Mammary epithelial cell (primary cell): ENCODE measurements at regions of chr17 and their contacts with region 1.

Region 1: DNA sequence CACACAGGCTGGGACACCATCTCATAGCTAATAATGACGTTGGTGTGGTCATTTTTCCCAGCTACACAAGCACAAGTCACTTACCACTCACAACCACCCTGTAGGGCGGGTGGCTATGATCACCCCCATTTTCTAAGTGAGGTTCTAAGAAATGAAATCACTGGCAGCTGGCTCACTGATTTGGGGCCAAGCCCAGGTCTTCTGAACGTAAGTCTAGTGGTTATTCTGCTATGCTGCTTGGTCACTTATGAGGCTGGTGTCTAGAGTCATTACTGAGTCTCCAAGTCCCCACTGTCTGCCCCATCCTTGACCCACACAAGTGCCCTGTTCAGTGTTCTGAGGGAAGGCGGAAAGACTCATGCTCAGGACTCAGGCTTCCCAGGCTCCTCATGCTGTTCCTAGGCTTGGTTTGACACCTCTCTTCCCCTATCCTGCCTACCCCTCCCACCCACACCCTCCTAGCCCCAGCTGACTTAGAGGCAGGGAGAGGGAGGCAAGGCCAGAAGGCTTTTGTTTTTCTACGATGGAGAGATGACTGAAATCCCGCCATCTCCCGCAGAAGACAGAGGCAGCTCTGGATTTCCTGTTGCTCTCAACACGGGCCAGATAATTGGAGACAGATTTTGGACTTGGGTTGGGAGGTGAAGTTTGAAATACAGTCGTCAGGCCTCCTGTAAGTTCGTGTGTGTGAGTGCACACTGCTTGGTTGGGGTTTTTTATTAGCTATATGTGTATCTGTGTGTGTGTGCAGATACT is 32.2 kb downstream of the FZD2 start:
- DNase-seq: no peak
- H3K4me3 ChIP-seq: no peak overlapping the region
- H3K27ac ChIP-seq: no peak overlapping the region
- H3K4me1 ChIP-seq: peaks cover 7% of the 10 kb centered on the region
- H3K27me3 ChIP-seq: no peaks in the 10 kb centered on the region
- CTCF ChIP-seq: no peak

Region 2: DNA sequence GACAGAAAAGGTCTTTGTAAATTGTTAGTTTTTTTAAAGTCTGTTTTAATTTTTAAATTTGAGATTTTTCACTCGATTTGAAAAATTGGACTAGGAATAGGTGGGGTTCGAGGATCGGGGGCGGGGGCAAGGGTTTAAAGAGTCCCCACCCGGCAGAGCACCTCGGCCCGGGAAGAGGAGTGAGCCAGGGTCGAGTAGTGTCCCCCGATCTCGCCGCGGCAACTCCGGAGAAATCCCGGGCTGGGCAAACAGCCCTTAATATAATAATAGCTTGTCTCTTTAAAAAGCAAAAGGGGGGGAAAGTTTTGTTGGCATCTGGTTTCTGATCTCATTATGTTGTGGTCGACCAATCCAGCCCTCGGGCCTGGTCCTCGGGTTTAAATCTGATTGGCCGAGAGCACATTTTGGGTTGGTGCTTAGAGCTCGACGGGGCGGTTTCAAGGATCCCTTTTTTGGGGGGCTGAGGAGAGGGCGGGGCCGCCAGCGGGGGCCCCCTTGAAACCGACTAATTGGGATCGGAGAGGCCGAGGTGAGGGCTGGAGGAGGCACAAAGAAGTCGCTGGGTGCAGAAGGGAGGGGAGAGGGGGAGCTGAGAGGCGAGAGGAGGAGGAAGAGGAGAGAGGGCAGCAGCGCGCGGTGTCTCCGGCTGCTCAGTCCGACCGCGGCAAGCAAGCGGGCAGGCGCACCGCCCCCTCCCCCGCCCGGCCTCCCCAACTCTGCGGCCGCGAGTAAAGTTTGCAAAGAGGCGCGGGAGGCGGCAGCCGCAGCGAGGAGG is 32.5 kb before region 1 on chr17 and contains the start of gene FZD2:
- CTCF ChIA-PET with region 1: interaction called, 3 read pairs
- dilution Hi-C with region 1: loop called (anchors 5 kb)
- in situ Hi-C with region 1: no loop called
- intact Hi-C with region 1: no loop called
- DNase-seq: peak; percentile 93
- H3K4me3 ChIP-seq: peak within 1 kb of the TSS; percentile 62 to 99 (median 67)
- H3K27ac ChIP-seq: peak within 1 kb of the TSS; percentile 61
- H3K4me1 ChIP-seq: peaks cover 14% of the 10 kb centered on the region
- H3K27me3 ChIP-seq: no peaks in the 10 kb centered on the region
- CTCF ChIP-seq: no peak
- total RNA-seq, gene FZD2: 1.8 to 4.5 TPM

Region 3: GRCh38 chr17:44568945-44569858 is 20.3 kb before region 1 on chr17:
- CTCF ChIA-PET with region 1: no interaction called
- dilution Hi-C with region 1: no loop called
- in situ Hi-C with region 1: no loop called
- intact Hi-C with region 1: no loop called
- DNase-seq: no peak
- H3K4me3 ChIP-seq: no peak overlapping the region
- H3K27ac ChIP-seq: no peak overlapping the region
- H3K4me1 ChIP-seq: no peaks in the 10 kb centered on the region
- H3K27me3 ChIP-seq: no peaks in the 10 kb centered on the region
- CTCF ChIP-seq: no peak